ENCODE measurements at regions of chr14 and their contacts with region 1.

Region 1: DNA sequence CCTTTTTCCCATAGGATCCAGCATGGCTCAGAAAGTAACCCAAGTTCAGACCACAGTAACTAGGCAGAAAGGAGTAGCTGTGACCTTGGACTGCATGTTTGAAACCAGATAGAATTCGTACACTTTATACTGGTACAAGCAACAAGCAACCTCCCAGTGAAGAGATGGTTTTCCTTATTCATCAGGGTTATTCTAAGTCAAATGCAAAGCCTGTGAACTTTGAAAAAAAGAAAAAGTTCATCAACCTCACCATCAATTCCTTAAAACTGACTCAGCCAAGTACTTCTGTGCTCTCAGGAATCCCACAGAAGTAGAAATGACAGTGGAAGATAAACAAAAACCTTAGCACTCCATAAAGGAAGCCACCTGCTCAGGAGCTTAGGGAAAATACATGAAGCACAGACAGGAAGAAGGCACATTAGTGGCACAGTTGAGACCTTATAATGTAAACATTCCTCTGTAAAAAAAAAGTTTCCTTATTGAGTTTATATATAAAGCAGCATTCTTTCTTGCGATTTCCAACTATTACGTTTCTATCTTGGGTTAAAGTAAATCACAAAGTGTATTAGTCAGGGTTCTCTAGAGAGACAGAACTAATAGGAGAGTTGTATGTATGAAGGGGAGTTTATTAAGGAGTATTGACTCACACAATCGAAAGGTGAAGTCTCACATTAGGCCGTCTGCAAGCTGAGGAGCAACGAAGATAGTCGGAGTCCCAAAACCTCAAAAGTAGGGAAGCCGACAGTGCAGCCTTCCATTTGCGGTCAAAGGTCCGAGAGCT is 398.4 kb downstream of the DAD1 start:
- DNase-seq: no peak
- H3K4me3 ChIP-seq: no peak overlapping the region
- H3K27ac ChIP-seq: no peak overlapping the region
- H3K4me1 ChIP-seq: peaks cover 4% of the 10 kb centered on the region
- H3K27me3 ChIP-seq: no peaks in the 10 kb centered on the region
- CTCF ChIP-seq: no peak
- POLR2A ChIP-seq: no peak

Region 2: GRCh38 chr14:21874167-21874566 is 316.4 kb before region 1 on chr14:
- CTCF ChIA-PET with region 1: no interaction called
- POLR2A ChIA-PET with region 1: no interaction called
- dilution Hi-C with region 1: no loop called
- intact Hi-C with region 1: no loop called
- DNase-seq: peak; percentile 60
- H3K4me3 ChIP-seq: peak overlapping the region in 1 of 3 experiments; percentile 48
- H3K27ac ChIP-seq: peak overlapping the region; percentile 60
- H3K4me1 ChIP-seq: peaks cover 17% of the 10 kb centered on the region
- H3K27me3 ChIP-seq: no peaks in the 10 kb centered on the region
- CTCF ChIP-seq: no peak
- POLR2A ChIP-seq: no peak

Region 3: GRCh38 chr14:21924479-21924878 is 266.1 kb before region 1 on chr14:
- CTCF ChIA-PET with region 1: no interaction called
- POLR2A ChIA-PET with region 1: no interaction called
- dilution Hi-C with region 1: no loop called
- intact Hi-C with region 1: no loop called
- DNase-seq: peak; percentile 43
- H3K4me3 ChIP-seq: no peak overlapping the region
- H3K27ac ChIP-seq: peak overlapping the region; percentile 84
- H3K4me1 ChIP-seq: peaks cover 18% of the 10 kb centered on the region
- H3K27me3 ChIP-seq: no peaks in the 10 kb centered on the region
- CTCF ChIP-seq: no peak
- POLR2A ChIP-seq: no peak

Region 4: GRCh38 chr14:22163051-22163450 is 27.6 kb before region 1 on chr14:
- CTCF ChIA-PET with region 1: interaction called, 5 read pairs
- POLR2A ChIA-PET with region 1: no interaction called
- dilution Hi-C with region 1: no loop called
- intact Hi-C with region 1: loop called (anchors 2 kb)
- DNase-seq: peak; percentile 23
- H3K4me3 ChIP-seq: no peak overlapping the region
- H3K27ac ChIP-seq: no peak overlapping the region
- H3K4me1 ChIP-seq: peaks cover 3% of the 10 kb centered on the region
- H3K27me3 ChIP-seq: peaks cover 10 to 11% of the 10 kb centered on the region in 2 experiments
- CTCF ChIP-seq: peak; percentile 7 to 18
- POLR2A ChIP-seq: no peak

Region 5: GRCh38 chr14:22338917-22339715 is 148.5 kb after region 1 on chr14:
- CTCF ChIA-PET with region 1: no interaction called
- POLR2A ChIA-PET with region 1: no interaction called
- dilution Hi-C with region 1: no loop called
- intact Hi-C with region 1: no loop called
- DNase-seq: no peak
- H3K4me3 ChIP-seq: no peak overlapping the region
- H3K27ac ChIP-seq: no peak overlapping the region
- H3K4me1 ChIP-seq: peaks cover 2% of the 10 kb centered on the region
- H3K27me3 ChIP-seq: peaks cover 0 to 8% of the 10 kb centered on the region in 2 experiments
- CTCF ChIP-seq: no peak
- POLR2A ChIP-seq: no peak